Naive thymus-derived CD4-positive, alpha-beta T cell (primary cell): ENCODE measurements at regions of chr15 and their contacts with region 1.

Region 1: DNA sequence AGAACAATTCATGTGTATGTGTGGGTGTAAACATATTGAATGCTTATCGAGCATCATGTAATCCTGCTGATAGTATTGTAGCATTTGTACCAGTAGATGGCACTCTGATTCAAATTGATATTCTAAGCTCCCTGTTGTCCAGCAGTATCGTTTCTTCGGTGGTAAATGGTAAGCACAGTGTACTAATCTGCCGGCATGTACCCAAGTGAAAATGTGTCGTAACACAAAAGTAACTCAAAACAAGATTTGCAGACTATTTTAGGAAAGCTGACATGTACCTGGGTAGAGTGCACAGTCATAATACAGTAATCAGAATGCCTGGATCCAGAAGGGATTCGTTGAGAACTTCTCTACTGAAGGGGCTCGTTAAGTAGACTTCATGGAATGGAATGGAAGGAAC is 31.7 kb upstream of the MNS1 start:
- DNase-seq: peak in 5 of 9 donors; percentile 19 to 42 (median 35)
- ATAC-seq: peak; percentile 69
- H3K4me3 ChIP-seq: no peak overlapping the region
- H3K4me3 Mint-ChIP-seq: peak overlapping the region in 2 of 10 donors; percentile 14 to 40
- H3K27ac ChIP-seq: no peak overlapping the region
- H3K27ac Mint-ChIP-seq: no peak overlapping the region
- H3K4me1 ChIP-seq: no peaks in the 10 kb centered on the region
- H3K4me1 Mint-ChIP-seq: peaks cover 0 to 8% (median 3%) of the 10 kb centered on the region in 7 donors
- H3K27me3 ChIP-seq: no peaks in the 10 kb centered on the region
- H3K27me3 Mint-ChIP-seq: peaks cover 9 to 32% (median 20%) of the 10 kb centered on the region in 5 donors

Region 2: GRCh38 chr15:55721554-55722185 is 775.0 kb before region 1 on chr15:
- CTCF ChIA-PET with region 1: no interaction called
- POLR2A ChIA-PET with region 1: no interaction called
- intact Hi-C with region 1: no loop called
- DNase-seq: no peak
- ATAC-seq: no peak
- H3K4me3 ChIP-seq: no peak overlapping the region
- H3K4me3 Mint-ChIP-seq: no peak overlapping the region
- H3K27ac ChIP-seq: no peak overlapping the region
- H3K27ac Mint-ChIP-seq: no peak overlapping the region
- H3K4me1 ChIP-seq: no peaks in the 10 kb centered on the region
- H3K4me1 Mint-ChIP-seq: no peaks in the 10 kb centered on the region
- H3K27me3 ChIP-seq: peaks cover 0 to 4% of the 10 kb centered on the region in 2 donors
- H3K27me3 Mint-ChIP-seq: peaks cover 25 to 46% (median 38%) of the 10 kb centered on the region in 5 donors

Region 3: GRCh38 chr15:56821721-56822425 is 325.2 kb after region 1 on chr15:
- CTCF ChIA-PET with region 1: interaction called, 3 read pairs
- POLR2A ChIA-PET with region 1: no interaction called
- intact Hi-C with region 1: loop called in 1 of 2 experiments (anchors 5 kb)
- DNase-seq: peak in 7 of 9 donors; percentile 12 to 46 (median 32)
- ATAC-seq: peak; percentile 62
- H3K4me3 ChIP-seq: no peak overlapping the region
- H3K4me3 Mint-ChIP-seq: no peak overlapping the region
- H3K27ac ChIP-seq: no peak overlapping the region
- H3K27ac Mint-ChIP-seq: no peak overlapping the region
- H3K4me1 ChIP-seq: no peaks in the 10 kb centered on the region
- H3K4me1 Mint-ChIP-seq: peaks cover 0 to 4% (median 0%) of the 10 kb centered on the region in 7 donors
- H3K27me3 ChIP-seq: no peaks in the 10 kb centered on the region
- H3K27me3 Mint-ChIP-seq: no peaks in the 10 kb centered on the region

Region 4: DNA sequence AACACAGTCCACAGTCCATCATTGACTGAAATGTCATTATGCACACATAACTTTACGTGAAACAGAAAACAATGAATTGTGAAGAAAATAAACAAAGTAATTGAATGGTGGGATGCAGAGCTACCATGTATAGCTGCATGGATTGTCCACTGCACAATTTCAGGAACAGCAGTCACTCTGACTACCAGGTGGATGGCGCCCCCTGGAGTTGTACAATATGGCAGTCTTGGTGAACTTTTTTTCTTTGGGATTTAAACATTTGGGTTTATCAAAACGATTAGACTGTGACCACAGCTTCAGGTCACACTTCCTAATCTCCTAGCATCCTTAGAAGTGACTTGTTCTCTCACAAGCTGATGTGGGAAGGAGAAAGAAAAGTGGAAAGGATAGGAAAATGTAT is 372.9 kb after region 1 on chr15:
- CTCF ChIA-PET with region 1: interaction called, 5 read pairs
- POLR2A ChIA-PET with region 1: no interaction called
- intact Hi-C with region 1: loop called in 1 of 2 experiments (anchors 1 kb)
- DNase-seq: peak in 1 of 9 donors; percentile 56
- ATAC-seq: no peak
- H3K4me3 ChIP-seq: no peak overlapping the region
- H3K4me3 Mint-ChIP-seq: no peak overlapping the region
- H3K27ac ChIP-seq: no peak overlapping the region
- H3K27ac Mint-ChIP-seq: no peak overlapping the region
- H3K4me1 ChIP-seq: no peaks in the 10 kb centered on the region
- H3K4me1 Mint-ChIP-seq: no peaks in the 10 kb centered on the region
- H3K27me3 ChIP-seq: no peaks in the 10 kb centered on the region
- H3K27me3 Mint-ChIP-seq: no peaks in the 10 kb centered on the region

Region 5: DNA sequence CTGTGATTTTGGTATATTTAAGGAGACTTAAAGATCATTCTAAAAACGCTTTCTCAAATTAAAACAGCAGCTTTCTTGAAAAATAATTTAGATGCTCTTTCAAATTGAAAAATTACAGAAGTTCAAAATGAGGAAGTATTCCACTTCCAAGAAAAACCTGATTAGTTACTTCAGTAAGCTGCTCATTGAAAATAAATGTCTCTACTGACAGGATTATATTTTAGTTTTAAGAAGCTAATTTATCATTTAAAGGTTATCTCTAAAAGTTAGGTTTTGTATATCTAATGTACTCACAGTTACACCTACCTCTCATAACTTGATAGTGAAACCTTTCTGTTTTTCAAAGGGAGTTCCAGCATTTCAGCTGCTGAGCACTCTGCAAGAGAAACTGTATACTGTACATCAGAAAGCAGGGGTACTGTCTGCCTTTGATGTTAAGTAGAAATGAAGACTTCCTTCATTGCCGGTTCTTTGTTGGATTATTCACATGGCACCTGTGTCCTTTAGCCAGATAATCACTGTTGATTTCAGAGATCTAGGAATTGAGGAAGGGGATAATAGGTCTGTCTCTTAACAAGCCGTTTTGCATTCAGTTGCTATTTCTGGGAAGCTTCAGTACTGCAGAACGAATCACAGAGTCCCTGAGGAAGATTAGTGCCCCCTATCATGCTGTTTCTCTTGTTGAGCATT is 583.4 kb after region 1 on chr15:
- CTCF ChIA-PET with region 1: no interaction called
- POLR2A ChIA-PET with region 1: no interaction called
- intact Hi-C with region 1: loop called in 1 of 2 experiments (anchors 5 kb)
- DNase-seq: peak in 3 of 9 donors; percentile 2 to 8 (median 6)
- ATAC-seq: no peak
- H3K4me3 ChIP-seq: no peak overlapping the region
- H3K4me3 Mint-ChIP-seq: peak overlapping the region in 2 of 10 donors; percentile 23 to 30
- H3K27ac ChIP-seq: no peak overlapping the region
- H3K27ac Mint-ChIP-seq: peak overlapping the region in 2 of 9 donors; percentile 17 to 60
- H3K4me1 ChIP-seq: peaks cover 0 to 4% of the 10 kb centered on the region in 2 donors
- H3K4me1 Mint-ChIP-seq: peaks cover 20 to 57% (median 48%) of the 10 kb centered on the region in 7 donors
- H3K27me3 ChIP-seq: no peaks in the 10 kb centered on the region
- H3K27me3 Mint-ChIP-seq: no peaks in the 10 kb centered on the region

Region 6: DNA sequence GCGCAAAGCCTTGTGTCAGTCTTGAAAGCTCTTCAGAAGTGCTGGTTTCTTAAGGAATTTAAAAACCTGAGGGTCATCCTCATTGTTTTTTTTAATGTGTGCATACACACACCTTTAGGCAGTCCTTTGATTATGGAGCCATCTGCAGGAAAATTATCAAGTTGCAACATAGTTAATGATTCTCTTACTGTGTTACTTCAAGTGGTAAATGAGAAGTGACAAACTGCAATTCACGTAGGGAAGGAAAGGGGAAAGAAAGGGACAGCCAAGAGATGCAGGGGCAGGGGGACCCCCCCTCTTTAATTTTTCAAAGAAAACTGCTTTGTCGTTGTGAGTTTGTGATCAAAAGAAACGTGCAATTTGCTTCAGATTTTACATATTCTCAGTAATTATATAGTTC is 717.2 kb after region 1 on chr15:
- CTCF ChIA-PET with region 1: interaction called, 5 read pairs
- POLR2A ChIA-PET with region 1: no interaction called
- intact Hi-C with region 1: loop called (anchors 1 to 5 kb)
- DNase-seq: peak in 5 of 9 donors; percentile 5 to 31 (median 14)
- ATAC-seq: peak; percentile 42
- H3K4me3 ChIP-seq: no peak overlapping the region
- H3K4me3 Mint-ChIP-seq: no peak overlapping the region
- H3K27ac ChIP-seq: no peak overlapping the region
- H3K27ac Mint-ChIP-seq: no peak overlapping the region
- H3K4me1 ChIP-seq: no peaks in the 10 kb centered on the region
- H3K4me1 Mint-ChIP-seq: peaks cover 2 to 59% (median 42%) of the 10 kb centered on the region in 7 donors
- H3K27me3 ChIP-seq: no peaks in the 10 kb centered on the region
- H3K27me3 Mint-ChIP-seq: no peaks in the 10 kb centered on the region